Colonic mucosa (tissue), 4 donors: ENCODE measurements at regions of chr4 and their contacts with region 1.

Region 1: DNA sequence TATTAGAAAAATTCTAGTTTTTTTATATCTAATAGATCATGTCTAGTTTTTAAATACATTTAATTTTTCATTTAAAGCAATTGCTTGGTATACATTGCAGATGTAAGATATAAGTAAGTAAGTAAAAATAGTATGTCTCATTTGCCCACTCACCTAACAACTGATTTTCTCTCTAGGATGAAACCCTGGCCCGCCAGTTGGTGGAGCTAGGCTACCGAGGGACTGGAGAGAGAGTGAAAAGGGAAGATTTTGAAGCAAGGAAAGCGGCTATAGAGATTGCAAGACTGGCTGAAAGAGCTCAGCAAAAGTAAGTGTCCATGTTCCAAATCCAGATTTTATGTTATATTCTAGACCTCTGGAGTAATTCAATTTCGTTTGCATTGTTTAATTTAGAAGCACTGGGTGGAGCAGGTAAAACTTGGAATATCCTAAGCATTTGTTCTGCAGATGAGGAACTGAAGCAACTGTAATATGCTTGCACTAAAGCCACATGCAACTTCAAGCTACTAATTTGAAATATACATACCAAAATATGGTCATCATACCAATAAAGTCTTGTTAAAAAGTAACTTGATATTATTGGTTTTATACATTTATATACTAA is 27.1 kb downstream of the CFAP299 start:
- DNase-seq: peak; percentile 50
- H3K4me3 ChIP-seq: no peak overlapping the region
- H3K27ac ChIP-seq: no peak overlapping the region
- H3K4me1 ChIP-seq: no peaks in the 10 kb centered on the region
- H3K27me3 ChIP-seq: no peaks in the 10 kb centered on the region
- CTCF ChIP-seq: peak; percentile 52

Region 2: DNA sequence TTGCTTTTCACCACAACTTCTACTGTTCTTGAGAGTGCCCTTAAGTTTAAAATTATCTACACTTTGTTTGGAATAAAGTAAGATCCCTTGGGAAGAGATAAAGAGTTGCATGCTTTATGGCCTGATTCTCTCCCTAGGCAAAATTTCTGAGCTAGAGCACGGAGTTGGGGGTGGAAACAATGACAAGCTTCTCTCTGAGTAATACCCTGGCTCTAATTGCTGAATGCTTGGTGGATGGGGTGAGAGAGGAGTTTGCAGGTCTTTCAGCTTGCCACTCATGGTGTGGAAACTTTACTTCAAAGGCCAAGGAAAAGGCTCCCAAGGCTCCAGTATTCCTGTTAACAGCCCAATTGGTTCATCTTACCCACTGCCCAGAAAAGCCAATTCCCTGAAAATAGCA is 191.4 kb before region 1 on chr4:
- intact Hi-C with region 1: no loop called
- DNase-seq: no peak
- H3K4me3 ChIP-seq: no peak overlapping the region
- H3K27ac ChIP-seq: no peak overlapping the region
- H3K4me1 ChIP-seq: no peaks in the 10 kb centered on the region
- H3K27me3 ChIP-seq: no peaks in the 10 kb centered on the region
- CTCF ChIP-seq: no peak

Region 3: DNA sequence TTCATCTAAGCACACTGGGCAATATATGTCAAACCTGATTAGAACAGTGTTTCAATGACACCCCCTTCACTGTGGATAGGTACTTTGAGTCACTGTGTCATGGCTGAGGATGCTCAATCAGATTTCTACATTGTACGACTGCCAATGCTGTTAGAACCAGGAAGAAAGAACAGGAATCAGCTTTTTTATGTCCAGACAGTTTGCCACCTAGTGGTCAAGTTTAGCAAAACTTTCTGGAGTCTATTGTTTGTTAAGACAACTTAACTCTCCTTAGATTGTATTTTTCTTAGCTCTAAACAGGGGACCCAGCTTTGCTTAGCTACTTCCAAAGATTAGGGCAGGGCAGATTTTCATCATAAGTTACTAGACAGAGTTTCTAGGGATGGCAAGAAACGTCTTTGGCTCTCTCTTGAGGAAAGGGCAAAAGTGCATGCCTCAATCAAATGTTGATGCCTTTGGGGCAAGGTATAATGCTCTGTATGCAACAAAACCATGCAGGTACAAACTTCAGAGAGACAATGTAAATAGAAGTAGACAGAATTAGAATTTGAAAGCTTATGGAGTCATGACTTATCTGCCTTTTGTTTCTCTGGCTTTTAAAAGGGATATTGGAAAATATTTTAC is 627.4 kb after region 1 on chr4:
- intact Hi-C with region 1: loop called (anchors 5 kb)
- DNase-seq: peak; percentile 33
- H3K4me3 ChIP-seq: no peak overlapping the region
- H3K27ac ChIP-seq: no peak overlapping the region
- H3K4me1 ChIP-seq: no peaks in the 10 kb centered on the region
- H3K27me3 ChIP-seq: no peaks in the 10 kb centered on the region
- CTCF ChIP-seq: peak; percentile 48

Region 4: GRCh38 chr4:81052119-81053068 is 689.7 kb after region 1 on chr4:
- intact Hi-C with region 1: loop called (anchors 2 kb)
- DNase-seq: peak; percentile 86
- H3K4me3 ChIP-seq: no peak overlapping the region
- H3K27ac ChIP-seq: no peak overlapping the region
- H3K4me1 ChIP-seq: no peaks in the 10 kb centered on the region
- H3K27me3 ChIP-seq: no peaks in the 10 kb centered on the region
- CTCF ChIP-seq: peak; percentile 70

Region 5: DNA sequence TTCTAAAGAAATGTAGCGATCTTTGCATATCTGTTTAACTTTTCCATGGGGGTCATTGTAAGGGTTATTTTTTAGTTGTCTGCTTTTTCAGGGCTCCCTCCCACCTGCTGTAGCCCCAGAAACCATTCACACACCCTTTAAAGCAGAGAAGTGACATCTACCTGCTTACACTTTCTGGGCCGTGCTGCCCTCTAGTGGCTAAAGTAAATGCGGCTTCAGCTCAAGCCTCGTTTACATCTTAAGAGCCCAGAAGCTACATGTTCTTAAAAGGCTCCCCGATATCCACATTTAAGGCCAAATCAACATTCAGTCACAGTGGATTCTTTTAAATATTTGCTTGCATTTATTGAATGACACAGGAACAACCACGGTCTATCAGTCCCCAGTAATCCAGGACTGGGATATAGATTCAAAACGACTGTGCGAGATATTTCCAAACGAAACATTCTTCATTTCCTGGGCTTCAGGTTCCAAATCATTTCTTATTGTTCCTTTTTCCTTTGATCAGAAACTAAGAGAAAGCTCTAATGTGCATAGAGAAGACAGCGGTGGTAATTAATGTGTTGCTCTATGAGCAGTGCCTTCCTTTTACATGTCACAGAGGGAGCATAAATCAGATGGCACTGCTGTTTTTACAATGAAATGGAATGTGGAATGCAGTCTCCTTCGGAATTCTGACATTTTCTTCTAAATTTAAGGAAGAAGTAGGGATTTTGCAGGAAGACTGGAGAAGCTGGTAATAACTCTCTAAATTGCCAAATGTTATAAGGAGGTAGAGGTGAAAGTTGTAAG is 989.2 kb after region 1 on chr4:
- intact Hi-C with region 1: loop called (anchors 5 kb)
- DNase-seq: peak; percentile 81
- H3K4me3 ChIP-seq: no peak overlapping the region
- H3K27ac ChIP-seq: no peak overlapping the region
- H3K4me1 ChIP-seq: no peaks in the 10 kb centered on the region
- H3K27me3 ChIP-seq: no peaks in the 10 kb centered on the region
- CTCF ChIP-seq: peak; percentile 92